HEK293T (cell line): ENCODE measurements at regions of chr16 and their contacts with region 1.

Region 1: DNA sequence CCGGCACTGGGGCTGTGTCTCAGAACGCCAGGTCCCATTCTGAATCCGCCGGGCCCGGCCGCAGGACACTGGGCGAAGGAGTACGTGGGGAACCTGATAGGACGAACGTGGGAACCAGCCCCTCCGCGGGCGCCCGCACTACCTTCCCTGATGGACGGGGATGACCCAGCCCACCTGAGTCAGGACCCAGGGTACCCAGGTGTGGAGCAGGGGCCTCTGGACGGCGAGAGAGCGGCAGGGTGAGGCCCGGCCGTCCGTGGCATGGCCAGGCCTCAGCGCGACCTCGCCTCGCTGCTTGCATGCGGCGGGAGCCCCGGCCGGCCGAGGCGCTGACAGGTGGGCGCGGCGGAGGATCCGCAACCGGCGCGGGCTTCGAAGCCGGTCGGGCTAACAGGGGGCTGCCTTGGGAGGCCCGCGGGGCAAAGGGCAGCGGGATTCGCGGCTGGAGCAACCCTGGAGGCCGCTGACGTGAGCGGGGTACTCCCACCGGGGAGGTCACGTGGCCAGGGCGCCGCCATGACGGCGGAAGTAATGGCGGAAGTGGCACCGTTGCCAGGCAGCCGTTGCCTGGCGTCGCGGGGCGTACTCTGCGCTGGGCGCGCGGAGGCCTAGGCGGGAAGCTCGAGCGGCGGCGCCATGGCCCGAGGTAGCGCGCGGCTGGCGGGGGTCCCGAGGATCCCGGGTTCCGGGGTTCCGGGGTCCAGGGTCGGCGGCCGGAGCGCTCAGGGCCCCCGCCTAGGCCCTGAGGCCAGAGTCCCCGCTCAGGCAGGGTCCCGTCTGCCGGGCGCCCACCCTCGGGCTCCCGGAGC is at the start of gene WDR90:
- DNase-seq: peak; percentile 92

Region 2: GRCh38 chr16:636206-637080 is 12.5 kb before region 1 on chr16 and contains the start of gene METTL26:
- CTCF ChIA-PET with region 1: no interaction called
- POLR2A ChIA-PET with region 1: interaction called, 21 read pairs
- DNase-seq: peak; percentile 89

Region 3: GRCh38 chr16:660459-661183 is 11.6 kb after region 1 on chr16:
- CTCF ChIA-PET with region 1: interaction called, 4 read pairs
- POLR2A ChIA-PET with region 1: interaction called, 12 read pairs
- DNase-seq: peak; percentile 95

Region 4: DNA sequence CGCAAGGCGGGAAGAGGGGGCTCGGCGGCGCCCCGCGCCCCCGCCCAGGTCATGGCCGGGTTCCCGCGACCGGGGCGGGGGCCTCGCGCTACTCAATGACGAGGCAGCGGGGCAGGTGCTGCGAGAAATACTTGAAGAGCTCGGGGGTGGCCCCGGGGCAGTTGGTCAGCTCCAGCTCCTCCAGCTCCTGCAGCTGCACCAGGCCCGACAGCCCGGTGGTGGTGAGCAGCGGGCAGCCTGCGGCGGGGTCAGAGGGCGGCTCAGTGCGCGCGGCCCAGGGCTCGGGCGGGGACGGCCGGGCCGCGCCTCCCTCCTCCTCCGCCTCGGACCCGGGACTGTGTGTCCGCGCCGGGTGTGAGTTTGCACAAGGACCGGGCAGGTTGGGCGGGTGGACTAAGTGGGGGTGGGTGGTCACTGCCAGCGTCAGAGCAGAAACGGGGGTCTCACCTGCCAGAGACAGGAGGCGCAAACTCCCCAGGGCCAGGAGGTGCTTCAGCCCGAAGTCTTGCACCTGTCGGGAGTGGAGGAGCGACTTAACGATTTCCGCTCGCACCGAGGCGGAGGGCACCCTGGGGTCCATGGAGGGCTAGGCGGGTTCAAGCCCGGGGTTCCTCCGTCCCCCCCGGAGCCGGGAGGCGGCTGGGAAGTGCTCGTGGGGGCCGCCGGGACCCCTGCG is 45.3 kb after region 1 on chr16:
- CTCF ChIA-PET with region 1: no interaction called
- POLR2A ChIA-PET with region 1: no interaction called
- DNase-seq: no peak